HepG2 (cell line): ENCODE measurements at regions of chr17 and their contacts with region 1.

Region 1: GRCh38 chr17:42248351-42249179 is 27.6 kb downstream of the STAT5B start:
- DNase-seq: peak; percentile 93
- ATAC-seq: peak; percentile 97
- H3K4me3 ChIP-seq: peak overlapping the region; percentile 38 to 55 (median 46)
- H3K27ac ChIP-seq: peak overlapping the region; percentile 57
- H3K4me1 ChIP-seq: peaks cover 60% of the 10 kb centered on the region
- H3K27me3 ChIP-seq: no peaks in the 10 kb centered on the region
- CTCF ChIP-seq: peak; percentile 45
- EP300 ChIP-seq: no peak
- POLR2A ChIP-seq: peak; percentile 47 to 54; a peak in 3 of 4 replicates
- RAD21 ChIP-seq: no peak; the same call in 1 of the 2 replicates

Region 2: DNA sequence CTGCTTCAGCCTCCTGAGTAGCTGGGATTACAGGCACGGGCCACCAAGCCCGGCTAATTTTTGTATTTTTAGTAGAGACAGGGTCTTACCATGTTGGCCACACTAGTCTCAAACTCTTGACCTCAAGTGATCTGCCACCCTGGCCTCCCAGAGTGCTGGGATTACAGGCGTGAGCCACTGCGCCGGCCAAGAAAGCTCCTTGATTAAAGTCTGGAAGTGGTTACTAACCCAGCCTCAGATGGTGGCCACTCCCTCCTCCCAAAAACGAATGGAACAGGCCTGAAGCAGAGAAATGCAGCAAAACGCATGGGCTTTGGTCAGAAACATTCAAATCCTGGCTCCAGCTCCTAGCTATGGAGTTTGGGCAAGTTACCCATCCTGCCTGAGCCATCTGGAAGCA is 424.5 kb before region 1 on chr17:
- CTCF ChIA-PET with region 1: no interaction called
- POLR2A ChIA-PET with region 1: no interaction called
- in situ Hi-C with region 1: no loop called
- intact Hi-C with region 1: no loop called
- DNase-seq: no peak
- ATAC-seq: no peak
- H3K4me3 ChIP-seq: no peak overlapping the region
- H3K27ac ChIP-seq: no peak overlapping the region
- H3K4me1 ChIP-seq: peaks cover 37% of the 10 kb centered on the region
- H3K27me3 ChIP-seq: no peaks in the 10 kb centered on the region
- CTCF ChIP-seq: no peak
- EP300 ChIP-seq: no peak
- POLR2A ChIP-seq: no peak
- RAD21 ChIP-seq: no peak

Region 3: GRCh38 chr17:42193969-42194899 is 54.3 kb before region 1 on chr17 and contains the start of gene GHDC:
- CTCF ChIA-PET with region 1: no interaction called
- POLR2A ChIA-PET with region 1: interaction called, 22 read pairs
- in situ Hi-C with region 1: no loop called
- intact Hi-C with region 1: loop called (anchors 10 kb)
- DNase-seq: peak; percentile 80
- ATAC-seq: peak; percentile 93
- H3K4me3 ChIP-seq: peak within 1 kb of the TSS; percentile 62 to 94 (median 68)
- H3K27ac ChIP-seq: peak within 1 kb of the TSS; percentile 29
- H3K4me1 ChIP-seq: peaks cover 21% of the 10 kb centered on the region
- H3K27me3 ChIP-seq: no peaks in the 10 kb centered on the region; a peak in 1 of 5 replicates
- CTCF ChIP-seq: peak; percentile 39; the same call in 1 of the 2 replicates
- EP300 ChIP-seq: 0 out of 4 replicates have a peak, but pooled peaks of 1 of the 2 experiments have one; percentile 21
- POLR2A ChIP-seq: peak; percentile 45 to 96; a peak in 3 of 4 replicates
- RAD21 ChIP-seq: no peak
- total RNA-seq, gene GHDC: 8.8 and 22.5 TPM in 2 replicates

Region 4: GRCh38 chr17:42212382-42212781 is 36.2 kb before region 1 on chr17:
- CTCF ChIA-PET with region 1: no interaction called
- POLR2A ChIA-PET with region 1: no interaction called
- in situ Hi-C with region 1: no loop called
- intact Hi-C with region 1: no loop called
- DNase-seq: no peak
- ATAC-seq: no peak
- H3K4me3 ChIP-seq: no peak overlapping the region
- H3K27ac ChIP-seq: no peak overlapping the region
- H3K4me1 ChIP-seq: no peaks in the 10 kb centered on the region
- H3K27me3 ChIP-seq: no peaks in the 10 kb centered on the region
- CTCF ChIP-seq: no peak
- EP300 ChIP-seq: no peak
- POLR2A ChIP-seq: no peak
- RAD21 ChIP-seq: no peak

Region 5: GRCh38 chr17:42266918-42267778 is 18.6 kb after region 1 on chr17:
- CTCF ChIA-PET with region 1: no interaction called
- POLR2A ChIA-PET with region 1: interaction called, 13 read pairs
- in situ Hi-C with region 1: no loop called
- intact Hi-C with region 1: no loop called
- DNase-seq: no peak
- ATAC-seq: no peak
- H3K4me3 ChIP-seq: no peak overlapping the region
- H3K27ac ChIP-seq: no peak overlapping the region
- H3K4me1 ChIP-seq: peaks cover 57% of the 10 kb centered on the region
- H3K27me3 ChIP-seq: no peaks in the 10 kb centered on the region
- CTCF ChIP-seq: no peak
- EP300 ChIP-seq: no peak
- POLR2A ChIP-seq: no peak
- RAD21 ChIP-seq: no peak

Region 6: DNA sequence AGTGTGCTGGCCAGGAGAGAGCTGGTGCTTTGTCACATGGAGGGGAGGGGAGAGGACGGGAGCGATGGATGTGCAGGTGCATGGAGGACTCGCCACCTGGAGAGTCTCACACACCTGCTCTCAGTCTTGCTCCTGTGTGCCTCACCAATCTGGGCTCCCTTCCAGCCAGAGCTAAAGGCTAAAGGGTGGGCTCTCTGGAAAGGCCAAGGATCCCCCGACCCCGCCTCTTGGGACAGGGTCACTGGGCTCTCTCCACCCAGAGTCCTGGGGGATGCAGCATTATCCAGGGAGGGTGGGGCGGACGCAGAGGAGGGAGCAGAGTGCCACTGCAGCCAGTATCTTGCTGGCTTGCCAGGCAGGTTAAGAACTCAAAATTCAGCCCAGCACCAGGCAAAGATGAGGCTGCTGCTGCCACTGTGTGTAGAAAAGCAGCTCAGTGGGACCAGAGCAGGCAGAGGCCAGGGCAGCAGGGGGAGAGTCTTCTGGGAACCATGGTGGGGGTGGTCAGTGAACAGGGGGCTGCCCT is 33.1 kb after region 1 on chr17:
- CTCF ChIA-PET with region 1: no interaction called
- POLR2A ChIA-PET with region 1: interaction called, 11 read pairs
- in situ Hi-C with region 1: no loop called
- intact Hi-C with region 1: loop called (anchors 5 kb)
- DNase-seq: no peak
- ATAC-seq: no peak
- H3K4me3 ChIP-seq: no peak overlapping the region
- H3K27ac ChIP-seq: no peak overlapping the region
- H3K4me1 ChIP-seq: peaks cover 55% of the 10 kb centered on the region
- H3K27me3 ChIP-seq: peaks cover 0 to 23% of the 10 kb centered on the region in 2 experiments; a peak in 3 of 5 replicates
- CTCF ChIP-seq: no peak
- EP300 ChIP-seq: no peak
- POLR2A ChIP-seq: no peak
- RAD21 ChIP-seq: no peak

Region 7: GRCh38 chr17:43006639-43007551 is 758.3 kb after region 1 on chr17 and contains the start of gene IFI35:
- CTCF ChIA-PET with region 1: no interaction called
- POLR2A ChIA-PET with region 1: no interaction called
- in situ Hi-C with region 1: no loop called
- intact Hi-C with region 1: no loop called
- DNase-seq: peak; percentile 83
- ATAC-seq: peak; percentile 78
- H3K4me3 ChIP-seq: peak within 1 kb of the TSS; percentile 71 to 92 (median 88)
- H3K27ac ChIP-seq: peak within 1 kb of the TSS; percentile 92
- H3K4me1 ChIP-seq: peaks cover 81% of the 10 kb centered on the region
- H3K27me3 ChIP-seq: no peaks in the 10 kb centered on the region; a peak in 1 of 5 replicates
- CTCF ChIP-seq: peak; percentile 97
- EP300 ChIP-seq: no peak
- POLR2A ChIP-seq: peak; percentile 75 to 76
- RAD21 ChIP-seq: peak; percentile 88
- total RNA-seq, gene IFI35: 38.1 and 40.2 TPM in 2 replicates